CD8-positive, alpha-beta T cell (primary cell): ENCODE measurements at regions of chr7 and their contacts with region 1.

Region 1: GRCh38 chr7:141737834-141738591 is at the start of gene SSBP1:
- DNase-seq: peak; percentile 84 to 98 (median 90)
- ATAC-seq: peak; percentile 84
- H3K4me3 ChIP-seq: peak within 1 kb of the TSS; percentile 63 to 83
- H3K4me3 Mint-ChIP-seq: peak within 1 kb of the TSS; percentile 99
- H3K27ac ChIP-seq: peak within 1 kb of the TSS; percentile 77 to 81
- H3K27ac Mint-ChIP-seq: peak within 1 kb of the TSS; percentile 99
- H3K4me1 ChIP-seq: peaks cover 30% of the 10 kb centered on the region
- H3K4me1 Mint-ChIP-seq: peaks cover 45% of the 10 kb centered on the region
- H3K27me3 ChIP-seq: no peaks in the 10 kb centered on the region
- H3K27me3 Mint-ChIP-seq: no peaks in the 10 kb centered on the region
- CTCF ChIP-seq: peak; percentile 85
- total RNA-seq, gene SSBP1: 107 TPM

Region 2: GRCh38 chr7:140696680-140697446 is 1041.2 kb before region 1 on chr7 and contains the start of gene NDUFB2:
- CTCF ChIA-PET with region 1: no interaction called
- POLR2A ChIA-PET with region 1: no interaction called
- intact Hi-C with region 1: loop called in 1 of 2 experiments (anchors 5 kb)
- DNase-seq: peak in 8 of 9 experiments; percentile 30 to 85 (median 64)
- ATAC-seq: peak; percentile 87
- H3K4me3 ChIP-seq: peak within 1 kb of the TSS; percentile 96 to 100
- H3K4me3 Mint-ChIP-seq: peak within 1 kb of the TSS; percentile 97
- H3K27ac ChIP-seq: peak within 1 kb of the TSS; percentile 96
- H3K27ac Mint-ChIP-seq: peak within 1 kb of the TSS; percentile 99
- H3K4me1 ChIP-seq: peaks cover 19% of the 10 kb centered on the region
- H3K4me1 Mint-ChIP-seq: peaks cover 45% of the 10 kb centered on the region
- H3K27me3 ChIP-seq: no peaks in the 10 kb centered on the region
- H3K27me3 Mint-ChIP-seq: no peaks in the 10 kb centered on the region
- CTCF ChIP-seq: no peak
- total RNA-seq, gene NDUFB2: 83.9 to 84.5 TPM

Region 3: GRCh38 chr7:141534757-141535737 is 203.0 kb before region 1 on chr7:
- CTCF ChIA-PET with region 1: no interaction called
- POLR2A ChIA-PET with region 1: no interaction called
- intact Hi-C with region 1: no loop called
- DNase-seq: no peak
- ATAC-seq: no peak
- H3K4me3 ChIP-seq: no peak overlapping the region
- H3K4me3 Mint-ChIP-seq: no peak overlapping the region
- H3K27ac ChIP-seq: no peak overlapping the region
- H3K27ac Mint-ChIP-seq: no peak overlapping the region
- H3K4me1 ChIP-seq: no peaks in the 10 kb centered on the region
- H3K4me1 Mint-ChIP-seq: no peaks in the 10 kb centered on the region
- H3K27me3 ChIP-seq: no peaks in the 10 kb centered on the region
- H3K27me3 Mint-ChIP-seq: peaks cover 30% of the 10 kb centered on the region
- CTCF ChIP-seq: no peak

Region 4: GRCh38 chr7:141551094-141551781 is 186.8 kb before region 1 on chr7 and contains the start of gene AGK:
- CTCF ChIA-PET with region 1: interaction called, 6 read pairs
- POLR2A ChIA-PET with region 1: interaction called, 12 read pairs
- intact Hi-C with region 1: loop called (anchors 1 to 2 kb)
- DNase-seq: peak; percentile 55 to 86 (median 72)
- ATAC-seq: peak; percentile 96
- H3K4me3 ChIP-seq: peak within 1 kb of the TSS; percentile 68 to 82
- H3K4me3 Mint-ChIP-seq: peak within 1 kb of the TSS; percentile 93
- H3K27ac ChIP-seq: peak within 1 kb of the TSS; percentile 34 to 50
- H3K27ac Mint-ChIP-seq: peak within 1 kb of the TSS; percentile 89
- H3K4me1 ChIP-seq: peaks cover 18% of the 10 kb centered on the region
- H3K4me1 Mint-ChIP-seq: peaks cover 31% of the 10 kb centered on the region
- H3K27me3 ChIP-seq: no peaks in the 10 kb centered on the region
- H3K27me3 Mint-ChIP-seq: no peaks in the 10 kb centered on the region
- CTCF ChIP-seq: no peak
- total RNA-seq, gene AGK: 20.5 to 22.6 TPM

Region 5: GRCh38 chr7:141701489-141702046 is 36.4 kb before region 1 on chr7:
- CTCF ChIA-PET with region 1: interaction called, 16 read pairs
- POLR2A ChIA-PET with region 1: interaction called, 56 read pairs
- intact Hi-C with region 1: loop called (anchors 1 kb)
- DNase-seq: peak; percentile 50 to 93 (median 76)
- ATAC-seq: peak; percentile 86
- H3K4me3 ChIP-seq: peak overlapping the region; percentile 57
- H3K4me3 Mint-ChIP-seq: peak overlapping the region; percentile 89
- H3K27ac ChIP-seq: peak overlapping the region; percentile 63 to 74
- H3K27ac Mint-ChIP-seq: peak overlapping the region; percentile 92
- H3K4me1 ChIP-seq: peaks cover 36% of the 10 kb centered on the region
- H3K4me1 Mint-ChIP-seq: peaks cover 50% of the 10 kb centered on the region
- H3K27me3 ChIP-seq: no peaks in the 10 kb centered on the region
- H3K27me3 Mint-ChIP-seq: no peaks in the 10 kb centered on the region
- CTCF ChIP-seq: no peak

Region 6: DNA sequence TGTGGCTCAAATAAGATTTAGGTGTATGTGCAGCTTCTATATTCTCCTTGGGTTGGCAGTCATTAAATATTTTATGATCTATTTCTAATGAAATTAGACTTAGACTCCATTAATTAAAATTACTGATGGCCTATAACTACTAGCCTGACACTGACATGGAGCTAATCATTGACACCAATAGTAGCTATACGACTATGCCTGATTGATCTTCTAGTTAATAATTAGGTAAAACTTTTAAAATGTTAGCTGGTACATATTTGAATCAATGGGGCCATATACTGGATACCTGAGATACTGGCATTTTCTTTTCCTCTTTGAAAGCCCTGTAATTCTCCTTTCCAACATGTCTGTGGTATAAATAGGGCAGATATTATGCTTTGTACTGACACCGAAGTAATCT is 15.5 kb before region 1 on chr7:
- CTCF ChIA-PET with region 1: interaction called, 18 read pairs
- POLR2A ChIA-PET with region 1: interaction called, 4 read pairs
- intact Hi-C with region 1: no loop called
- DNase-seq: no peak
- ATAC-seq: no peak
- H3K4me3 ChIP-seq: no peak overlapping the region
- H3K4me3 Mint-ChIP-seq: no peak overlapping the region
- H3K27ac ChIP-seq: no peak overlapping the region
- H3K27ac Mint-ChIP-seq: no peak overlapping the region
- H3K4me1 ChIP-seq: no peaks in the 10 kb centered on the region
- H3K4me1 Mint-ChIP-seq: no peaks in the 10 kb centered on the region
- H3K27me3 ChIP-seq: no peaks in the 10 kb centered on the region
- H3K27me3 Mint-ChIP-seq: no peaks in the 10 kb centered on the region
- CTCF ChIP-seq: no peak

Region 7: GRCh38 chr7:143117395-143117794 is 1379.4 kb after region 1 on chr7:
- CTCF ChIA-PET with region 1: no interaction called
- POLR2A ChIA-PET with region 1: no interaction called
- intact Hi-C with region 1: no loop called
- DNase-seq: no peak
- ATAC-seq: no peak
- H3K4me3 ChIP-seq: no peak overlapping the region
- H3K4me3 Mint-ChIP-seq: no peak overlapping the region
- H3K27ac ChIP-seq: no peak overlapping the region
- H3K27ac Mint-ChIP-seq: no peak overlapping the region
- H3K4me1 ChIP-seq: no peaks in the 10 kb centered on the region
- H3K4me1 Mint-ChIP-seq: no peaks in the 10 kb centered on the region
- H3K27me3 ChIP-seq: no peaks in the 10 kb centered on the region
- H3K27me3 Mint-ChIP-seq: no peaks in the 10 kb centered on the region
- CTCF ChIP-seq: no peak

Region 8: GRCh38 chr7:143372070-143372469 is 1634.1 kb after region 1 on chr7:
- CTCF ChIA-PET with region 1: no interaction called
- POLR2A ChIA-PET with region 1: no interaction called
- intact Hi-C with region 1: loop called in 1 of 2 experiments (anchors 10 kb)
- DNase-seq: peak; percentile 36 to 81 (median 71)
- ATAC-seq: peak; percentile 33
- H3K4me3 ChIP-seq: no peak overlapping the region
- H3K4me3 Mint-ChIP-seq: peak overlapping the region; percentile 24
- H3K27ac ChIP-seq: peak overlapping the region in 1 of 2 experiments; percentile 36
- H3K27ac Mint-ChIP-seq: peak overlapping the region; percentile 75
- H3K4me1 ChIP-seq: peaks cover 58% of the 10 kb centered on the region
- H3K4me1 Mint-ChIP-seq: peaks cover 55% of the 10 kb centered on the region
- H3K27me3 ChIP-seq: no peaks in the 10 kb centered on the region
- H3K27me3 Mint-ChIP-seq: no peaks in the 10 kb centered on the region
- CTCF ChIP-seq: peak; percentile 18